IMR-90 (cell line): ENCODE measurements at regions of chr16 and their contacts with region 1.

Region 1: DNA sequence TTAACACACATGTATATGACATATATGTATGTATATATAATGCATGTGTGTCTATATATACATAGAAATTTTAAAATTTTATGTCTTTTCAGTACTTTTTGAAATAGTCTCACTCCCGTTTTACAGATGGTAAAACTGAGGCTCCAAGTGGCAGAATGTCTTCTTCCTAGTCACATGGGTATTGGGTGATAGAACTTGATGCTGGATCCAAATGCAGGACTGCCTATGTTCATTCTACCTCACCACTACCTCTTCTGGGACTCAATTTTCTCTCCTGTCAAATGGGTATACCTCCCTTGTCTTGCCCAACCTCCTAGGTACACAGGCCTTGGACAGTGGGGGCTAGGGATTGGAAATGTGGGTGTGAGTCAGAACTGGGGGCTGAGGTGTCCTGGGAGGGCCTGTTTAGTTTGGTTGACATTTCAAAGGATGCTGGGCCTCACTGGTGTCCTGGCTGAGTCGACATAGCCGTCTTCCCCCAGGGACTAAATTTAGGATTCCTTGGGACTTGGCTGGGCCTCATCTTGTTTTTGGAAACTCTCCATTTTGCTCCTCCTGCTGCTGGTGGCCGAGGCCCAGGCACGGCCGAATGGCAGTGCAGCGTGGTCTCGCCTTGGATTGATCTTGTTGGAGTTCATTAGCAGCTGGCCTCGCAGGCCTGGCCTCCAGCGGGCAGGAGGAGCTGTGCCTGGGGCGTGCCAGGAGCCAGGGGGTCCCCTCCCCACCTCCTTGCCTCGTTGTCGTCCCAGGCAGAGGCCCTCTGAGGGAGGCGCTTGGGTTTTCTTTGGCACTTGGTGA is 25.9 kb downstream of the NKD1 start:
- DNase-seq: no peak
- ATAC-seq: no peak
- H3K4me3 ChIP-seq: no peak overlapping the region
- H3K27ac ChIP-seq: no peak overlapping the region
- H3K4me1 ChIP-seq: no peaks in the 10 kb centered on the region
- H3K27me3 ChIP-seq: peaks cover 2% of the 10 kb centered on the region; the same call in 1 of the 2 replicates
- CTCF ChIP-seq: no peak
- POLR2A ChIP-seq: no peak
- RAD21 ChIP-seq: no peak

Region 2: GRCh38 chr16:50403491-50403890 is 170.7 kb before region 1 on chr16:
- CTCF ChIA-PET with region 1: no interaction called
- POLR2A ChIA-PET with region 1: interaction called, 23 read pairs
- dilution Hi-C with region 1: no loop called
- in situ Hi-C with region 1: no loop called
- intact Hi-C with region 1: no loop called
- DNase-seq: no peak
- ATAC-seq: no peak
- H3K4me3 ChIP-seq: no peak overlapping the region
- H3K27ac ChIP-seq: no peak overlapping the region
- H3K4me1 ChIP-seq: no peaks in the 10 kb centered on the region
- H3K27me3 ChIP-seq: no peaks in the 10 kb centered on the region; the same call in 1 of the 2 replicates
- CTCF ChIP-seq: no peak
- POLR2A ChIP-seq: no peak
- RAD21 ChIP-seq: no peak